Heart right ventricle (tissue), 16 donors: ENCODE measurements at regions of chrX and their contacts with region 1.

Region 1: DNA sequence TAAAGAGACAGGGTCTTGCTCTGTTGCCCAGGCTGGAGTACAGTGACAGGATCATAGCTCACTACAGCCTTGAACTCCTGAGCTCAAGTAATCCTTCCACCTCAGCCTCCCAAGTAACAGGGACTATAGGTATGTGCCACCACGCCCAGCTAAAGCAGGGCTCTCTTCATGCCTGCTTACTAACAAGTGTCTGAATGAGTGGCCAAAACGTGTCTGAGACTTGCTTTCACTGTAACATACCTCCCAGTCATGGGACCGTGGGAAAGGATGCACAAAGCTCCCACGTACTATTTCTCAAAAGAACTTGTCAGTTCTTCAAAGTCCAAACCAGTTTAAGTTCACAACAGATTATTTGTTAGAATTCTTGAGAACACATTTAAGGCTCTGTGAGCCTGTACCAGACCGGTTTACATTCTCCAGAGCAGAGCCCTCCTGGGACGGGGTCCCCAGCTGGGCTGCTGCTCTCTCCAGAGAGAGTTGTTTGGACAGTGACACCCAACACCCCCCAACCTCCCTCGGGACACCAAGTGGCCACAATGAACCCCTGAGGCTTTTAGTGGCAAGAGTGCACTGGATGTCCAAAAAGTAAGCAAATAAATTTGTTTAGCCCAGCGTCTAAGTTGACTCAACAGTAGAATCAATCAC is 24.1 kb downstream of the SH3KBP1 start:
- DNase-seq: peak in 1 of 2 donors; percentile 18
- ATAC-seq: peak in 3 of 8 donors; percentile 14 to 48 (median 32)
- H3K4me3 ChIP-seq: no peak overlapping the region
- H3K27ac ChIP-seq: peak overlapping the region in 5 of 10 donors; percentile 20 to 73 (median 34)
- H3K4me1 ChIP-seq: peaks cover 0 to 59% (median 9%) of the 10 kb centered on the region in 9 donors
- H3K27me3 ChIP-seq: peaks cover 0 to 7% (median 0%) of the 10 kb centered on the region in 7 donors
- CTCF ChIP-seq: no peak

Region 2: GRCh38 chrX:19772826-19773628 is 90.3 kb before region 1 on chrX:
- intact Hi-C with region 1: loop called in 2 of 10 experiments (anchors 10 kb)
- DNase-seq: no peak
- ATAC-seq: peak in 2 of 8 donors; percentile 17 to 31
- H3K4me3 ChIP-seq: no peak overlapping the region
- H3K27ac ChIP-seq: peak overlapping the region in 9 of 10 donors; percentile 32 to 86 (median 72)
- H3K4me1 ChIP-seq: peaks cover 0 to 58% (median 14%) of the 10 kb centered on the region in 9 donors
- H3K27me3 ChIP-seq: no peaks in the 10 kb centered on the region
- CTCF ChIP-seq: no peak

Region 3: GRCh38 chrX:19811807-19812604 is 51.3 kb before region 1 on chrX:
- intact Hi-C with region 1: no loop called
- DNase-seq: no peak
- ATAC-seq: no peak
- H3K4me3 ChIP-seq: no peak overlapping the region
- H3K27ac ChIP-seq: peak overlapping the region in 1 of 10 donors; percentile 54
- H3K4me1 ChIP-seq: peaks cover 0 to 25% (median 0%) of the 10 kb centered on the region in 9 donors
- H3K27me3 ChIP-seq: no peaks in the 10 kb centered on the region
- CTCF ChIP-seq: no peak